ENCODE measurements at regions of chr19 and their contacts with region 1.

Region 1: GRCh38 chr19:29941828-29942403 is at the start of gene URI1:
- DNase-seq: peak; percentile 93 to 97
- ATAC-seq: peak; percentile 93 to 99 (median 95)
- H3K4me3 ChIP-seq: peak within 1 kb of the TSS; percentile 90
- H3K4me3 Mint-ChIP-seq: peak within 1 kb of the TSS; percentile 94
- H3K27ac ChIP-seq: peak within 1 kb of the TSS; percentile 64
- H3K27ac Mint-ChIP-seq: peak within 1 kb of the TSS; percentile 86 to 89
- H3K4me1 ChIP-seq: peaks cover 17% of the 10 kb centered on the region
- H3K4me1 Mint-ChIP-seq: peaks cover 37 to 39% of the 10 kb centered on the region in 2 donors
- H3K27me3 ChIP-seq: no peaks in the 10 kb centered on the region
- H3K27me3 Mint-ChIP-seq: peaks cover 0 to 6% of the 10 kb centered on the region in 2 donors
- CTCF ChIP-seq: no peak
- total RNA-seq, gene URI1: 66.8 to 72.8 (median 68.4) TPM

Region 2: DNA sequence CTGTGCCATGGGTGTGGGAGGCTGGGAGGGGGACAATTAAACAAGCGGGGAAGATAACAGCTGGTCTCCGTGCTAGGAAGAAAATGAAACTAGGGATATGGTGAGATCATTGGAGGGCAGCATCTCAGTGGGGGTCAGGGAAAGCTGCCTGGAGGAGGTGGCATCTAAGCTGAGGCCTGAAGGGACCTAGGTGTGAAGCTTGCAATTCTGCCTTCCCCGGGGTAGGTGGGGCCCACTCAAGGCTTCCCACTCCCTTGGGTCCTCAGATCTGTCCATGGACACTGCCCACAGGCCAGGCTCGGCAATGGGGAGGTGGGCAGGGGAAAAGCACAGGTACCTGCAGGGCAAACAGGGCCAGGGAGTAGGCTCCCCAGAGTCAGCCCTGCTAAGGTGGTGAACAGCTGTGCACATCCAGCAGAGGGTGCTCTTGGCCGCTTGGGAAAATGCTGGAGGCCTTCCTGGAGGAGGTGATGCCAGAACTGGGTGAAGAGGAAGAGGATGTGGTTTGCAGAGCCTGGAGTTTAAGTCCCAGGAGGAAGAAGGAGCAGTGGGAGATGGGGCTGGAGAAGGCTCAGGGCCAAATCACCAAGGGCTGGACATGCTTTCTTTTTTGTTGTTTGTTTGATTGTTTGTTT is 155.8 kb before region 1 on chr19:
- intact Hi-C with region 1: no loop called
- DNase-seq: peak in 1 of 2 donors; percentile 28
- ATAC-seq: no peak
- H3K4me3 ChIP-seq: no peak overlapping the region
- H3K4me3 Mint-ChIP-seq: no peak overlapping the region
- H3K27ac ChIP-seq: no peak overlapping the region
- H3K27ac Mint-ChIP-seq: no peak overlapping the region
- H3K4me1 ChIP-seq: no peaks in the 10 kb centered on the region
- H3K4me1 Mint-ChIP-seq: peaks cover 0 to 3% of the 10 kb centered on the region in 2 donors
- H3K27me3 ChIP-seq: no peaks in the 10 kb centered on the region
- H3K27me3 Mint-ChIP-seq: no peaks in the 10 kb centered on the region
- CTCF ChIP-seq: no peak

Region 3: GRCh38 chr19:29844891-29845572 is 96.9 kb before region 1 on chr19:
- intact Hi-C with region 1: loop called (anchors 1 kb)
- DNase-seq: peak; percentile 93 to 97
- ATAC-seq: peak; percentile 77 to 90 (median 80)
- H3K4me3 ChIP-seq: peak overlapping the region; percentile 85
- H3K4me3 Mint-ChIP-seq: peak overlapping the region; percentile 96
- H3K27ac ChIP-seq: peak overlapping the region; percentile 81
- H3K27ac Mint-ChIP-seq: peak overlapping the region; percentile 89 to 91
- H3K4me1 ChIP-seq: peaks cover 24% of the 10 kb centered on the region
- H3K4me1 Mint-ChIP-seq: peaks cover 10 to 11% of the 10 kb centered on the region in 2 donors
- H3K27me3 ChIP-seq: peaks cover 11% of the 10 kb centered on the region
- H3K27me3 Mint-ChIP-seq: peaks cover 15 to 33% of the 10 kb centered on the region in 2 donors
- CTCF ChIP-seq: no peak

Measured in natural killer cell (primary cell).